MCF 10A (cell line): ENCODE measurements at regions of chr6 and their contacts with region 1.

Region 1: DNA sequence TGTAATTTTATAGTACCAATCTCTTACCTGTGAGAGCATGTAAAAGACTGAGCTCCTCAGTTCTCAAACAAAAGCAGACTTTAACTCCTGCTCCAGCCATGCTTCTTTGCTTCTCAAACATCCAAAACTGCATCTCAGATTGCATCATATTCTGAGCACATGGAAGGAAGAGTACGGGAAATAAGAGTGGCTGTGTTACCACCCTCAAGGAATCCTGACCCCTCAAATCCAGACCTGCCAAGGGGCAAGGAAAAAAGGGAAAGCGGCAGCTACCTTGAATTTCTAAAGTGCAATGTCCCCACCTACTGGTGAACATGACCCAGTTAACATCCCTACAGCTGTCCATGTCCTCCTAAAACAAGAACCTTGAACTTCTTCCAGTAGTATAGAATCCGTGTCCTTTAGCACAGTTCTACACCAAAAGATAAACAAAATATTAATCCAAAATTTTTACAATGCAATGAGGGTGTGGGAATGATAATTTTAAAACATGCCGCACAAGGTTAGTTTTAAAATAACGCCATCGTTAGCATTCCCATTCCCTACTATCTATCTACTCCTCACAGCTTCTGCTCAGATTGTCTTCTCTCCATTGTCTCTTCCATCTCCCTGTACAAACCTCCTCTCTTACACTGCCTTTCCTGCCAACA is 34.1 kb upstream of the HLA-DQB1 start:
- DNase-seq: peak; percentile 73
- H3K4me3 Mint-ChIP-seq: no peak overlapping the region
- H3K27ac Mint-ChIP-seq: no peak overlapping the region
- H3K4me1 Mint-ChIP-seq: no peaks in the 10 kb centered on the region
- H3K27me3 Mint-ChIP-seq: peaks cover 89% of the 10 kb centered on the region
- CTCF ChIP-seq: peak; percentile 45

Region 2: GRCh38 chr6:32244946-32245398 is 455.5 kb before region 1 on chr6:
- CTCF ChIA-PET with region 1: interaction called, 5 read pairs
- POLR2A ChIA-PET with region 1: no interaction called
- intact Hi-C with region 1: loop called (anchors 5 kb)
- DNase-seq: peak; percentile 74
- H3K4me3 Mint-ChIP-seq: peak overlapping the region; percentile 68
- H3K27ac Mint-ChIP-seq: peak overlapping the region; percentile 71
- H3K4me1 Mint-ChIP-seq: peaks cover 9% of the 10 kb centered on the region
- H3K27me3 Mint-ChIP-seq: peaks cover 12% of the 10 kb centered on the region
- CTCF ChIP-seq: peak; percentile 89

Region 3: DNA sequence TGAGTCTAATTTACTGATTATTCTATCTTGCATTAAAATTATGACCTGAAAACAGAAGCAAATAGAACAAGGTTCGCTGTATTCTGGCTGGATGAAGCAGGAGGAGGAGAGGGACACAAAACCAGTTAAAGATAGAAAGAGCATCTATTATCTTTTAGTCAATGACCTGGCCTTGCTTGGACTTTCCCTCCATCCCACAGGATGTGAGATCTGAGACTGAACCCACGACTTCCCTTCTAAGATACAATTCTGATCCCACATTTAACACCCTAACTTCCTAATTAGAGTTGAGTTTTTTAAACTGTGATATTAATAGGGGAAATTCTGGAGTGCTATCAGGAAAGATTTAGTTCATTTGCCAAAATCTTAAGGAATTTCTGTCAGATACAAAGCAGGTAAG is 37.6 kb after region 1 on chr6:
- CTCF ChIA-PET with region 1: no interaction called
- POLR2A ChIA-PET with region 1: no interaction called
- intact Hi-C with region 1: no loop called
- DNase-seq: no peak
- H3K4me3 Mint-ChIP-seq: no peak overlapping the region
- H3K27ac Mint-ChIP-seq: no peak overlapping the region
- H3K4me1 Mint-ChIP-seq: no peaks in the 10 kb centered on the region
- H3K27me3 Mint-ChIP-seq: peaks cover 89% of the 10 kb centered on the region
- CTCF ChIP-seq: no peak

Region 4: DNA sequence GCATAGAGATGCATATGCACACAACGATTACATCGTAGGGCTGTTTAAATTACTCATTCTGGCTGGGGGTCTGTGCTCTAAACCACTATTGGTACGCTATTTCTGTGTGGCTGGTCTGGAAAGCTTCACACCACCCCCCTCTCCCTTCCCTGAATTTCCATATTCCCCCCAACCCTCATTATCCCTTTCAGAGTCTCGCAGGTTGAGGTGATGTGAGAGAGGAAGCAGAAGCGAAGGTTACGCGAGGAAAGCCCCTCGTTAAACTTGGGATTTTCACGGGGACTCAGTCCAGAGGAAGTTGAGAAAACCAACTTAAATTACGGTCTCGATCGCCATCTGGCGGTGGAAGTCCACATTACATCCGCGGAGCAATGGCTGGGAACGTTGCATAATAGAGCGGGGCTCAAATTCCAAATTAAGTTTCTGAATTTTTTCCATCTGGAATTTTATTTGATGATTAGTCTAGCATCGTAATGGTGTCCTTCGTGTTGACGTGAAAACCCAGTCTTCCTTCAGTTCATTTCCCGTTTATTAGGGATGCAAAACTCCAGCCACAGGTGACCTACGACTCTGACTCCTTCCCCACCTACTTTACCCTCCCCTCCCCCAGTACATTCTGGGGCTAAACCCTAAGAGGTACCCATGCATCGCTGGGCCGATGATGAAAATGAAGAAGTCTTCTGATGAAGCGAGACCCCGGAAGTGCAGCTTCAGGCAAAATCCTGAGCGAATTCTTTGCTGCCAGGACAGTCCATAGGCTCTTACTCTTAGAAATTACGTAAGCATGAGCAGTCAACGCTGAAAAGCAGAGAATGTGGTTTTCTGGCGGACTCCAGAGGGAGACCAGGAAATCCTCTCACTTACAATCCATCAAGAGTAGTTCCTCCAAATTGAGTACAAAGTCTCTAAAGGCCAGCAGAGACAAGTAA is 96.6 kb after region 1 on chr6:
- CTCF ChIA-PET with region 1: interaction called, 4 read pairs
- POLR2A ChIA-PET with region 1: no interaction called
- intact Hi-C with region 1: loop called (anchors 5 kb)
- DNase-seq: peak; percentile 66
- H3K4me3 Mint-ChIP-seq: peak overlapping the region; percentile 62
- H3K27ac Mint-ChIP-seq: no peak overlapping the region
- H3K4me1 Mint-ChIP-seq: peaks cover 12% of the 10 kb centered on the region
- H3K27me3 Mint-ChIP-seq: peaks cover 76% of the 10 kb centered on the region
- CTCF ChIP-seq: peak; percentile 84